Naive thymus-derived CD4-positive, alpha-beta T cell (primary cell): ENCODE measurements at regions of chr22 and their contacts with region 1.

Region 1: DNA sequence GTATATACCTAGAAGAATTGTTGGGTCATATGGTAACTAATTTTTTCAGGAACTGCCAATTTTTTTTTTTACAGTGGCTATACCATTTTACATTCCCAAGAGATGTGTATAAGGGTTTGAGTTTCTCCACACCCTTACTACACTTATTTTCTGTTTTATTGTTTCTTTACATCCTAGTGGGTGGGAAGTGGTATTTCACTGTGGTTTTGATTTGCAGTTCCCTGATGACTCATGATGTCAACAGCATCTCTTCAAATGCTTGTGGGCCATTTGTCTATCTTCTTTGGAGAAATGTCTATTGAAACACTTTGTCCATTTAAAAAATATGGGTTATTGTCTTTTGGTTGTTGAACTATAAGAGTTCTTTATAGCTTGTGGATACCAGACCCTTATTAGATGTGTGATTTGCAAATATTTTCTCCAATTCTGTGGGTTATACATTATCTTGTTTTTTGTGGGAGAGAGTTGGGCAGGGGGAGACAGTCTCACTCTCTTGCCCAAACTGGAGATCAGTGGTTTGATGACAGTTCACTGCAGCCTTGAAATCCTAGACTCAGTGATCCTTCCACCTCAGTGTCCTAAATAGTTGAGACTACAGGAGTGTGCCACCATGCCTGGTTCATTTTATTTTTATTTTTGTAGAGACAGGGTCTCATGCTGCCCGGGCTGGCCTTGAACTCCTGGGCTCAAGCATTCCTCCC is 30.3 kb upstream of the PISD start:
- DNase-seq: no peak
- ATAC-seq: peak; percentile 56
- H3K4me3 ChIP-seq: no peak overlapping the region
- H3K4me3 Mint-ChIP-seq: peak overlapping the region in 1 of 10 donors; percentile 44
- H3K27ac ChIP-seq: no peak overlapping the region
- H3K27ac Mint-ChIP-seq: peak overlapping the region in 6 of 9 donors; percentile 5 to 86 (median 74)
- H3K4me1 ChIP-seq: peaks cover 0 to 4% of the 10 kb centered on the region in 2 donors
- H3K4me1 Mint-ChIP-seq: peaks cover 0 to 31% (median 0%) of the 10 kb centered on the region in 7 donors
- H3K27me3 ChIP-seq: no peaks in the 10 kb centered on the region
- H3K27me3 Mint-ChIP-seq: no peaks in the 10 kb centered on the region

Region 2: DNA sequence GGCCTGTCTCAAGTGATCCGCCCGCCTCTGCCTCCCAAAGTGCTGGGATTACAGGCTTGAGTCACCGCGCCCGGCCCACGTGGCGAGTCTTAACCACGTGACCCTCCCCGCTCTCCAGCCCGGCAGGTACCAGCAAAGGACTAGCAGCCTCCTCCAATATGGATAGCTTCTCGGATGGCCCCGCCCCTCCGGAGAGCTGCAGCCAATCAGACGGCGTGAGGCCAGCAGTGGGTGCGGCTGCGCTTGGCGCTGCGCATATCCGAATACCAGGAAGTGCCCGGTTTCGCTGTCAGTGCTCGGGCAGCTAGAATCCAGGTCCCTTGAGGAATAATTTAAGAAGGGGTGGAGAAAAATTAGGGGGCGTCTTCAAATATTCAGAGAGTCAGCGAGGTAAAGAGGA is 15.6 kb before region 1 on chr22:
- CTCF ChIA-PET with region 1: interaction called, 5 read pairs
- POLR2A ChIA-PET with region 1: interaction called, 6 read pairs
- intact Hi-C with region 1: loop called in 1 of 2 experiments (anchors 2 kb)
- DNase-seq: peak; percentile 83 to 90 (median 88)
- ATAC-seq: peak; percentile 100
- H3K4me3 ChIP-seq: peak overlapping the region; percentile 98
- H3K4me3 Mint-ChIP-seq: peak overlapping the region; percentile 85 to 97 (median 94)
- H3K27ac ChIP-seq: peak overlapping the region; percentile 74
- H3K27ac Mint-ChIP-seq: peak overlapping the region; percentile 91 to 100 (median 98)
- H3K4me1 ChIP-seq: no peaks in the 10 kb centered on the region
- H3K4me1 Mint-ChIP-seq: peaks cover 7 to 14% (median 10%) of the 10 kb centered on the region in 7 donors
- H3K27me3 ChIP-seq: no peaks in the 10 kb centered on the region
- H3K27me3 Mint-ChIP-seq: no peaks in the 10 kb centered on the region